ENCODE measurements at regions of chr3 and their contacts with region 1.

Region 1: GRCh38 chr3:180433152-180433551 is 168.8 kb upstream of the TTC14 start:
- DNase-seq: peak; percentile 94
- H3K4me3 ChIP-seq: peak overlapping the region in 1 of 3 experiments; percentile 17
- H3K27ac ChIP-seq: peak overlapping the region; percentile 97
- H3K4me1 ChIP-seq: peaks cover 41% of the 10 kb centered on the region
- H3K27me3 ChIP-seq: no peaks in the 10 kb centered on the region
- CTCF ChIP-seq: no peak

Region 2: GRCh38 chr3:180408654-180409053 is 24.5 kb before region 1 on chr3:
- CTCF ChIA-PET with region 1: no interaction called
- dilution Hi-C with region 1: no loop called
- in situ Hi-C with region 1: no loop called
- intact Hi-C with region 1: loop called (anchors 1 kb)
- DNase-seq: peak; percentile 87
- H3K4me3 ChIP-seq: no peak overlapping the region
- H3K27ac ChIP-seq: peak overlapping the region; percentile 59
- H3K4me1 ChIP-seq: peaks cover 38% of the 10 kb centered on the region
- H3K27me3 ChIP-seq: no peaks in the 10 kb centered on the region
- CTCF ChIP-seq: no peak

Region 3: DNA sequence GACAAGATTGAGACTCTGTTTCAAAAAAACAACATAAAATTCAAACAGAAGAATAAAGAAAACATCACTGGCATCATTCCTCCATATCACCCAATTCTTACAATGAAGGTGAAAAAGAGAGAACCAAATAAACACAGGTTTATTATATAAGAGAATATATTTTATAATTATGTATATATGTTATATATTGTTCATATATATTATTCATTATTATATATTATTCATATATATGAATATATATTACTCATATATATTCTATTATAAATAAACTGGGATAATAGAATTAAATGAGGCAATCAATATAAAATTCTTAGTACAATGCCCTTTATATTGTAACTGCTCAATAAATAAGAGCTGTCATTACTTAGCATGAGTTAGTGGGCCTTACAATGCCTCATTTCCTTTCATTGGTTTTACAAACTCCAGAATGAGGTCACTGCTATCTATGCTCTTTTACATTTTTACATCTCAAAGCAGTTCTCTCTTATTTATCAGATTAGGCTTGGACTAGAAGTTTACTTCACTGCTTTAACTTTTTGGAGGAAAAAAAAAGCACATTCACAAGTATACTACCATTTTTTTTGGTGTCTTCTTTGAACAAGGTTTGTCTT is 33.4 kb after region 1 on chr3:
- CTCF ChIA-PET with region 1: no interaction called
- dilution Hi-C with region 1: no loop called
- in situ Hi-C with region 1: no loop called
- intact Hi-C with region 1: loop called (anchors 5 kb)
- DNase-seq: peak; percentile 27
- H3K4me3 ChIP-seq: no peak overlapping the region
- H3K27ac ChIP-seq: peak overlapping the region; percentile 83
- H3K4me1 ChIP-seq: peaks cover 18% of the 10 kb centered on the region
- H3K27me3 ChIP-seq: no peaks in the 10 kb centered on the region
- CTCF ChIP-seq: no peak